BJ (cell line): ENCODE measurements at regions of chr15 and their contacts with region 1.

Region 1: DNA sequence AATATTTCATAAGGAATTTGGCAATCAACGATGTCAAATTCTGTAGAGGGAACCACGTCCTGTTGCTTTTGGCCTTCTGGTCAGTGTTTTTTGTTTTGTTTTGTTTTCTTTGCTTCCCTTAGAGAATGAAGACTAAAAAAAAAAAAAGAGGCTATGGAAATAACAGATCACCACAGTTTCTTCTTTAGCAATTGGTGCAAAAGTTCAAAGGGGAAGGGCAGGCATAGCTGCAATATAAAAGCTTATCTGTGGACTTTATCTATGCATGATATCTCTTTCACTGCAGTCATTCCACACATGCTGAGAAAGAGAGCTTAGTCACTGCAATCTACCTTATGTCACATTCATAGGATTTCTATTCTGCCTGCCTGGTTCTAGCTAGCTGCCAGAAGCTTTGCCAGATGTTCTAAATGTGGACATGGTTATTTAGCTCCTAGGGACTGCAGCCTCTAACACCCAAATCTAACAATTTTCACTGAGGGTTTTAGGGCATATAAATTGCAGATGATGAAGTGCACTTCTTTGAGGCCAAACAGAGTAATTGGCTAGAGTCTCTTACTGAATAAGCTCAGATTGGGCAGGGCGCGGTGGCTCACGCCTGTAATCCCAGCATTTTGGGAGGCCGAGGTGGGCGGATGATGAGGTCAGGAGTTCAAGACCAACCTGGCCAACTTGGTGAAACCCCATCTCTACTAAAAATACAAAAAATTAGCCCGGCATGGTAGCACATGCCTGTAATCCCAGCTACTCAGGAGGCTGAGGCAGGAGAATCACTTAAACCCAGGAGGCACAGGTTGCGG is 637.2 kb downstream of the NTRK3 start:
- DNase-seq: peak; percentile 75
- H3K4me3 ChIP-seq: no peak overlapping the region
- H3K27me3 ChIP-seq: no peaks in the 10 kb centered on the region
- CTCF ChIP-seq: no peak

Region 2: DNA sequence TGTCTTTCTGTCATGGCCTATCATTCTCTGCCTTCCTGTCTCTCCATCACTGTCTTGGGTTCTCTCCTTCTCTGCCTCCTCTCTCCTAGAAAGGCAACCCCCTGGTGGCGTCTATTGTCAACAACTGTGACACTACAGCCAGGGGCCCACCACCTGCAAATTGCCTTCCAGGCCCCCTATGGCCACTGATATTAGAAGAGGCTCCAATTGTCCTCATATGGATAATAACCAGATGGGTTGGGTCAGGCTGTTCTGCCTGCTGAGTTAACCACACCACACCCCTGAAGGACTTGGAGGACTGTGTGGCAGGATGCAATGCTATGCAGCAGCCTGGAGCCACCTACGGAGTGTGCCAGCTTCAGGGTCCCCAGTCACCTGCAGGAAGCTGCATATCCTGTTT is 27.8 kb before region 1 on chr15:
- CTCF ChIA-PET with region 1: no interaction called
- POLR2A ChIA-PET with region 1: no interaction called
- DNase-seq: no peak
- H3K4me3 ChIP-seq: no peak overlapping the region
- H3K27me3 ChIP-seq: no peaks in the 10 kb centered on the region; the same call in 1 of the 2 replicates
- CTCF ChIP-seq: no peak

Region 3: GRCh38 chr15:87639305-87640011 is 20.1 kb after region 1 on chr15:
- CTCF ChIA-PET with region 1: no interaction called
- POLR2A ChIA-PET with region 1: no interaction called
- DNase-seq: no peak
- H3K4me3 ChIP-seq: no peak overlapping the region
- H3K27me3 ChIP-seq: no peaks in the 10 kb centered on the region
- CTCF ChIP-seq: no peak

Region 4: GRCh38 chr15:87706001-87706400 is 86.6 kb after region 1 on chr15:
- CTCF ChIA-PET with region 1: no interaction called
- POLR2A ChIA-PET with region 1: interaction called, 17 read pairs
- DNase-seq: no peak
- H3K4me3 ChIP-seq: no peak overlapping the region
- H3K27me3 ChIP-seq: peaks cover 6% of the 10 kb centered on the region
- CTCF ChIP-seq: no peak

Region 5: DNA sequence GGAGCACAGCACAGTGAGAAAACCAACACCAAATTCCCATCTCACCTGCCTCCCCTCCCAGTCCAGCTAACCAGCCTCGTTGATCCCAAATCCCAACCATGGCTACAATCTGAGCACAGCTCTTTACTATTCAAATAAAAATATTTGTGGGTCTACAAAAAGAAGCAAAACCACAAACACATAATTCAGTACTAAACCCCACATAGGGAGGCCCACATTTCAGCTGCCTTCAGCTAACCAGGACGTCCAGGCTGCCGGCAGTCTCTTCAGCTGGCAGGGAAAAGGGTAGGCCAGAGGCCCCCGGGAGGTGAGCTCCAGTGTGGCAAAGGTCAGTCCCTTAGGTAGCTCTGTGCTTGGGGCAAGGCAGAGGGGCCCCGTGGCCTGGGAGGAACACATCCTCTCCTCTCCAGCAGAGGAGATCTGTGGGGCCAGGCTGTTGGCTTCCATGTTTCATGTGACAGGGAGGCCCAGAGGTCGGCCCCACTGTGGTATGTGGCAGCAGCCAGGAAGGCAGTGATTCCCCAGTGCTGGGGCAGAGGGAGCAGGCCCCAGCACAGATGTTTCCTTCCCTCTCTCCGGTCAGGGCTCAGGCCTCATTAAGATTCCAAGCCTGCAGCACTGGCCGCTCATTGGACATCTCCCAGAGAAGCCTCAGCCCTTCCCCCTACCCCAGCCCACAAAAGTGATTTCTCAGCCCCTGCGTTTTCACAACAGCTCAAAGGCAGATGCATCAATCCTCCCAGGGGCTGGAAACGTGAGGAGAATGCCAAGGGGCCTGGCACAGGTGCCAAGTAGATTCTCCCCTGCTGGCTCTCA is 255.7 kb after region 1 on chr15:
- CTCF ChIA-PET with region 1: no interaction called
- POLR2A ChIA-PET with region 1: interaction called, 14 read pairs
- DNase-seq: peak; percentile 60
- H3K4me3 ChIP-seq: no peak overlapping the region
- H3K27me3 ChIP-seq: no peaks in the 10 kb centered on the region
- CTCF ChIP-seq: no peak